ENCODE measurements at regions of chr4 and their contacts with region 1.

Region 1: DNA sequence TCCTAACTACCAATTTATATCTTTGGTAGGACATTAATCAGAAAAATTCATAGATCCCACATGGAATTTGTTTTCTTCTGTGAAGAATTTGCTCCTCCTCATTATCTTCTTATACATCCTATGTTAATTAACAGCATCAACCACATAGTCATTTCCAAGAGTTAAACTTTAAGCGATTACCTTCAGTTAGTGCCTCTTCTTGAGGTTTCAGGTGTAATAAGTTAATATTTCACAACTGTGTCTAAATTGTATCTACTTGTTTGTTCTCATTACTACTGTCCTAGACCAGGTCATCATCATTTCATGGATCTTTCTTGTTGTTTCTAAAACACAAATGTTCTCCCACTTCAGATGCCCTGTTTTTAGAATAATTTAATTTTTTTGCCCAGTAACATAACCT is 457.9 kb downstream of the FAT4 start:
- DNase-seq: no peak
- ATAC-seq: no peak
- H3K4me3 ChIP-seq: no peak overlapping the region
- H3K27ac ChIP-seq: no peak overlapping the region
- H3K4me1 ChIP-seq: no peaks in the 10 kb centered on the region
- H3K27me3 ChIP-seq: no peaks in the 10 kb centered on the region
- CTCF ChIP-seq: no peak
- POLR2A ChIP-seq: no peak
- RAD21 ChIP-seq: no peak

Region 2: DNA sequence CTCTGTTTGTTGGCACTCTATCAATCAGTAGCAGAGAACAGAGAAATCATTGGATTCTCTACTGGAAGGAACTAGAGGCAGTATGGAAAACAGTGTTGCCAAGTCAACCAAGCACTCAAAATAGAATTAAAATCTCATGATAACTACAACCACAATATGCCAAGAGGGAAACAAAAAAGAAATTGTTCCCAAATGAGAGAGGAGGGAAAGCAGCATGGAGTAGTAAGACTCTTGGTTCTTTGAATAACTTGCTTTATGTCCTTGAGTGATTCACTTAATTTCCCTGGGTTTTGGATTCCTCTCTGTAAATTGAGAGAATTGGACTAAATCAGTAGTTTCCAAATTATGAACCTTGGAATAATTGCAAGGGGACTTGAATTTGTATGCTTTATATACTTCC is 774.7 kb before region 1 on chr4:
- CTCF ChIA-PET with region 1: no interaction called
- POLR2A ChIA-PET with region 1: no interaction called
- RAD21 ChIA-PET with region 1: no interaction called
- intact Hi-C with region 1: no loop called
- DNase-seq: no peak
- ATAC-seq: no peak
- H3K4me3 ChIP-seq: no peak overlapping the region
- H3K27ac ChIP-seq: no peak overlapping the region
- H3K4me1 ChIP-seq: no peaks in the 10 kb centered on the region
- H3K27me3 ChIP-seq: no peaks in the 10 kb centered on the region
- CTCF ChIP-seq: no peak
- POLR2A ChIP-seq: no peak
- RAD21 ChIP-seq: no peak

Region 3: GRCh38 chr4:125741825-125742452 is 30.7 kb before region 1 on chr4:
- CTCF ChIA-PET with region 1: no interaction called
- POLR2A ChIA-PET with region 1: no interaction called
- RAD21 ChIA-PET with region 1: no interaction called
- intact Hi-C with region 1: loop called (anchors 1 kb)
- DNase-seq: no peak
- ATAC-seq: peak; percentile 76
- H3K4me3 ChIP-seq: no peak overlapping the region
- H3K27ac ChIP-seq: no peak overlapping the region
- H3K4me1 ChIP-seq: no peaks in the 10 kb centered on the region
- H3K27me3 ChIP-seq: no peaks in the 10 kb centered on the region
- CTCF ChIP-seq: peak; percentile 24 to 69 (median 61)
- POLR2A ChIP-seq: no peak
- RAD21 ChIP-seq: peak; percentile 70

Region 4: DNA sequence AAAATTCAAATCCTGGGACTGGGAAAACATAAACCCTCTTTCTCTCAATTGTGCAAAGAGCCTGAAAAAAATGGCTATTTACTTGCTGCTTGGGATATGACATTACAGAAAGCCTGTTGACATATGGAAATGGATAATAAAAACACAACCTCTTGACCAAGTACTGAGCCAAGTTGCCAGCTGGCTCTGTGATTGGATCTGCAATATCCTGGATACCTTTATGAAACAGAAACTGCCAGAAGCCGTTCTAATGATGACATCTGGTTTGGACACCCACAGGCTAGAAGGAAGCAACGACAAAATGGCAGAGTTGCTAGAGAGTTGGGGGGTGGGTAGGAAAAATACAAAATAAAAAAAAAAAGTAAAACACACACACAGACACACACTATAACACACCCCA is 23.5 kb after region 1 on chr4:
- CTCF ChIA-PET with region 1: no interaction called
- POLR2A ChIA-PET with region 1: no interaction called
- RAD21 ChIA-PET with region 1: no interaction called
- intact Hi-C with region 1: no loop called
- DNase-seq: no peak
- ATAC-seq: no peak
- H3K4me3 ChIP-seq: no peak overlapping the region
- H3K27ac ChIP-seq: no peak overlapping the region
- H3K4me1 ChIP-seq: no peaks in the 10 kb centered on the region
- H3K27me3 ChIP-seq: no peaks in the 10 kb centered on the region
- CTCF ChIP-seq: no peak
- POLR2A ChIP-seq: no peak
- RAD21 ChIP-seq: no peak

Measured in HCT116 (cell line).